CD4-positive, alpha-beta T cell (primary cell): ENCODE measurements at regions of chr5 and their contacts with region 1.

Region 1: DNA sequence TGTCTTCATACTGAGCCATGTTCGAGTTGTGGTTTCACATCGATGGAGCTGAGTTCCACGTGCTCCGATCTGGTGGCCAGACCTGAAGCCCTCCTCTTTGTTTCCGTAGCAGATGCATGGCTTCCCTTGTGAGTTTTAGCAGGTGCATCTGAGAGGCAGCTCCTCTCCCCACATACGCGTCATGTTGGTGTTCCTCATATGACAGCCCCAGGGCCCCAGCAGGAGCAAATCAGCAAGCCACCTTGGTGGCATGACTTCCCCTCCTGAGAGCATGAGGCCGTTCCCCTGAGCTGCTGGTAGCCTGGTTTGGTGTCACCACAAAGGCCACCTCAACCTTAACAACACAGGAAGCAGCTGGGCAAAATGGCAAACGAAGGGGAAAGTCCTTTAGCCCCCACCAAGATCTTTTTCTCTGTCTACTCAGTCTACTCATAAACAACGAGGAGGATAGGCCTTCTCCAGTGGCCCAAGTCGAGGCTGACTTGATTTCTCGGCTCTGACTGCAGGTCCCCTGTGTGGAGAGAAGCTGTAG is 5.9 kb downstream of the CYFIP2 start:
- DNase-seq: peak; percentile 74 to 97 (median 80)
- ATAC-seq: peak; percentile 90
- H3K4me3 ChIP-seq: peak overlapping the region; percentile 8
- H3K4me3 Mint-ChIP-seq: peak overlapping the region; percentile 80
- H3K27ac ChIP-seq: peak overlapping the region; percentile 81 to 94
- H3K27ac Mint-ChIP-seq: peak overlapping the region; percentile 93
- H3K4me1 ChIP-seq: peaks cover 74% of the 10 kb centered on the region
- H3K4me1 Mint-ChIP-seq: peaks cover 96% of the 10 kb centered on the region
- H3K27me3 ChIP-seq: no peaks in the 10 kb centered on the region
- H3K27me3 Mint-ChIP-seq: no peaks in the 10 kb centered on the region
- CTCF ChIP-seq: no peak

Region 2: DNA sequence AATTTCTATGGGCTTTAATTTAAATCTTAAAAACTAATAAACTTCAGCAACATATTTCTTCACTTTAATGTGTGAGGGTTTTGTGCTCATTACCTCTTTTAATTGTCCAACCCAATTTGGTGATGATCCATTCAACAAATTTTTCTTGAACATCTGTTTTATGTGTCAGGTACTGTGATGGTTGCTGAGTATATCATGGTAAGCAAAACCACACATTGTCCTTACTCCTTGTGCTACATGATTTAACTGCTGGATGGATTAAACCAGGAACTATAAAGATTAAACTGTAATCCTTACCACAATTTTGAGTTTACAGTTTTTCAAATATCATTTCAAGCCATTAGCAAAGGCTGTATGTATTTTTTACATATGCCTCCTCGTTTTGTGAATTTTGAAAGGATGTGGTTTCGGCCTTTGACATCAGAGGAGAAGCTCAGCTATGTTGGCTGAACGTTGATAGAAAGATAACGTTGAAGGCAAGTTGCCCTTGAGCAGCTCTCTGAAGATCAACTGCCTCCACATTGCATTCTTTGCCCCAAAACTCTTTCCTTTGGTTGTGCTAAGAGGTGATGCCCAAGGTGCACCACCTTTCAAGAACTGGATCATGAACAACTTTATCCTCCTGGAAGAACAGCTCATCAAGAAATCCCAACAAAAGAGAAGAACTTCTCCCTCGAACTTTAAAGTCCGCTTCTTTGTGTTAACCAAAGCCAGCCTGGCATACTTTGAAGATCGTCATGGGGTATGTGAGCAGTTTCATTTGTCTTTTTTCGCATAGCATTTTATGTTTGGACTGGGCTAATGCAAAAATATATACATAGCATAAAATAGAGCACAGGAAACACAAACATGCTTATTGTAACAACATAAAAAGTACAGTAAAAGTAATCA is 91.2 kb before region 1 on chr5 and contains the start of gene ITK:
- CTCF ChIA-PET with region 1: interaction called, 3 read pairs
- POLR2A ChIA-PET with region 1: interaction called, 12 read pairs
- intact Hi-C with region 1: no loop called
- DNase-seq: peak in 8 of 14 experiments; percentile 29 to 92 (median 53)
- ATAC-seq: peak; percentile 76
- H3K4me3 ChIP-seq: peak within 1 kb of the TSS; percentile 85
- H3K4me3 Mint-ChIP-seq: peak within 1 kb of the TSS; percentile 98
- H3K27ac ChIP-seq: peak within 1 kb of the TSS; percentile 69 to 74
- H3K27ac Mint-ChIP-seq: peak within 1 kb of the TSS; percentile 96
- H3K4me1 ChIP-seq: peaks cover 38% of the 10 kb centered on the region
- H3K4me1 Mint-ChIP-seq: peaks cover 57% of the 10 kb centered on the region
- H3K27me3 ChIP-seq: no peaks in the 10 kb centered on the region
- H3K27me3 Mint-ChIP-seq: no peaks in the 10 kb centered on the region
- CTCF ChIP-seq: no peak
- total RNA-seq, gene ITK: 289 to 292 TPM

Region 3: GRCh38 chr5:157204765-157205164 is 67.0 kb before region 1 on chr5:
- CTCF ChIA-PET with region 1: no interaction called
- POLR2A ChIA-PET with region 1: interaction called, 26 read pairs
- intact Hi-C with region 1: no loop called
- DNase-seq: peak in 4 of 14 experiments; percentile 46 to 80 (median 77)
- ATAC-seq: peak; percentile 56
- H3K4me3 ChIP-seq: no peak overlapping the region
- H3K4me3 Mint-ChIP-seq: peak overlapping the region; percentile 72
- H3K27ac ChIP-seq: peak overlapping the region; percentile 73 to 83
- H3K27ac Mint-ChIP-seq: peak overlapping the region; percentile 96
- H3K4me1 ChIP-seq: peaks cover 86% of the 10 kb centered on the region
- H3K4me1 Mint-ChIP-seq: peaks cover 92% of the 10 kb centered on the region
- H3K27me3 ChIP-seq: no peaks in the 10 kb centered on the region
- H3K27me3 Mint-ChIP-seq: no peaks in the 10 kb centered on the region
- CTCF ChIP-seq: no peak

Region 4: GRCh38 chr5:157225469-157226422 is 46.1 kb before region 1 on chr5:
- CTCF ChIA-PET with region 1: no interaction called
- POLR2A ChIA-PET with region 1: interaction called, 10 read pairs
- intact Hi-C with region 1: no loop called
- DNase-seq: peak in 3 of 14 experiments; percentile 32 to 76 (median 69)
- ATAC-seq: no peak
- H3K4me3 ChIP-seq: no peak overlapping the region
- H3K4me3 Mint-ChIP-seq: peak overlapping the region; percentile 20
- H3K27ac ChIP-seq: peak overlapping the region; percentile 41 to 44
- H3K27ac Mint-ChIP-seq: peak overlapping the region; percentile 80
- H3K4me1 ChIP-seq: peaks cover 65% of the 10 kb centered on the region
- H3K4me1 Mint-ChIP-seq: peaks cover 63% of the 10 kb centered on the region
- H3K27me3 ChIP-seq: no peaks in the 10 kb centered on the region
- H3K27me3 Mint-ChIP-seq: no peaks in the 10 kb centered on the region
- CTCF ChIP-seq: no peak

Region 5: GRCh38 chr5:157245477-157245876 is 26.3 kb before region 1 on chr5:
- CTCF ChIA-PET with region 1: no interaction called
- POLR2A ChIA-PET with region 1: interaction called, 123 read pairs
- intact Hi-C with region 1: no loop called
- DNase-seq: no peak
- ATAC-seq: no peak
- H3K4me3 ChIP-seq: no peak overlapping the region
- H3K4me3 Mint-ChIP-seq: no peak overlapping the region
- H3K27ac ChIP-seq: no peak overlapping the region
- H3K27ac Mint-ChIP-seq: peak overlapping the region; percentile 91
- H3K4me1 ChIP-seq: peaks cover 60% of the 10 kb centered on the region
- H3K4me1 Mint-ChIP-seq: peaks cover 68% of the 10 kb centered on the region
- H3K27me3 ChIP-seq: no peaks in the 10 kb centered on the region
- H3K27me3 Mint-ChIP-seq: no peaks in the 10 kb centered on the region
- CTCF ChIP-seq: no peak

Region 6: GRCh38 chr5:157283434-157283833 is 11.6 kb after region 1 on chr5:
- CTCF ChIA-PET with region 1: interaction called, 8 read pairs
- POLR2A ChIA-PET with region 1: interaction called, 48 read pairs
- intact Hi-C with region 1: loop called in 1 of 2 experiments (anchors 2 kb)
- DNase-seq: peak in 5 of 14 experiments; percentile 14 to 54 (median 52)
- ATAC-seq: peak; percentile 86
- H3K4me3 ChIP-seq: no peak overlapping the region
- H3K4me3 Mint-ChIP-seq: peak overlapping the region; percentile 52
- H3K27ac ChIP-seq: peak overlapping the region in 1 of 2 donors; percentile 24
- H3K27ac Mint-ChIP-seq: peak overlapping the region; percentile 83
- H3K4me1 ChIP-seq: peaks cover 66% of the 10 kb centered on the region
- H3K4me1 Mint-ChIP-seq: peaks cover 90% of the 10 kb centered on the region
- H3K27me3 ChIP-seq: no peaks in the 10 kb centered on the region
- H3K27me3 Mint-ChIP-seq: no peaks in the 10 kb centered on the region
- CTCF ChIP-seq: no peak

Region 7: DNA sequence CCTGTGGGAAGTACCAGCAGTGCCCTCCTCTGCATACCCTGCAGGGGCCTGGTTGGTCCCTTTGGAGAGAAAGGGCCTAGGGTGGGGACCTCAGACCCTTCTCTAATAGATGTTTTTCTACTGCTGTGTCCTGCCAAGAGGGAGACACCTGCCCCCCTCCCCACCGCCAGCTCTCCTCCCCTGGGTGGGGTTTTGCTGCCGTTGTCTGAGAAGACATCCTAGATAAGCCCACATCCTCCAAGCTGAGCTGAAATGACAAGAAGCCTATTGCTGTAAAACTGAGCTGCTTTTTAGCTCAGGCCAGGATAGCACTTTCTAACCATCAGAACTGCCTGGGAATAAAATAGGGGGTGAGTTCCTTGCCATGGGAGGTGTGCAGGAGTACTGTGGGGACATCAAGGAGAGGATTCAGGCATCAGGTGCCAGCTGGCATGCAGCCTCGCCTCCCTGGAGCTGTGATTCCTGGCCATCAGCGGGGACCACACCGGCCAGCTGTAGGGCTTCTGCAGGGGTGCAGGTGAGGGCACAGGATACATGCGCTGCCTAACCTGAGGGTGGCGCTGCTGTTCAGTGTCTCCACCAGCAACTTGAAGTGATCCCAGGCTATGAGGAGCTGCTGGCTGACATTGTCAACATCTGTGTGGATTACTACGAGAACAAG is 32.0 kb after region 1 on chr5:
- CTCF ChIA-PET with region 1: interaction called, 14 read pairs
- POLR2A ChIA-PET with region 1: interaction called, 77 read pairs
- intact Hi-C with region 1: loop called in 1 of 2 experiments (anchors 5 kb)
- DNase-seq: peak; percentile 45 to 86 (median 56)
- ATAC-seq: peak; percentile 72
- H3K4me3 ChIP-seq: peak overlapping the region; percentile 42
- H3K4me3 Mint-ChIP-seq: peak overlapping the region; percentile 87
- H3K27ac ChIP-seq: peak overlapping the region; percentile 54 to 65
- H3K27ac Mint-ChIP-seq: peak overlapping the region; percentile 80
- H3K4me1 ChIP-seq: peaks cover 57% of the 10 kb centered on the region
- H3K4me1 Mint-ChIP-seq: peaks cover 70% of the 10 kb centered on the region
- H3K27me3 ChIP-seq: no peaks in the 10 kb centered on the region
- H3K27me3 Mint-ChIP-seq: no peaks in the 10 kb centered on the region
- CTCF ChIP-seq: peak; percentile 26

Region 8: DNA sequence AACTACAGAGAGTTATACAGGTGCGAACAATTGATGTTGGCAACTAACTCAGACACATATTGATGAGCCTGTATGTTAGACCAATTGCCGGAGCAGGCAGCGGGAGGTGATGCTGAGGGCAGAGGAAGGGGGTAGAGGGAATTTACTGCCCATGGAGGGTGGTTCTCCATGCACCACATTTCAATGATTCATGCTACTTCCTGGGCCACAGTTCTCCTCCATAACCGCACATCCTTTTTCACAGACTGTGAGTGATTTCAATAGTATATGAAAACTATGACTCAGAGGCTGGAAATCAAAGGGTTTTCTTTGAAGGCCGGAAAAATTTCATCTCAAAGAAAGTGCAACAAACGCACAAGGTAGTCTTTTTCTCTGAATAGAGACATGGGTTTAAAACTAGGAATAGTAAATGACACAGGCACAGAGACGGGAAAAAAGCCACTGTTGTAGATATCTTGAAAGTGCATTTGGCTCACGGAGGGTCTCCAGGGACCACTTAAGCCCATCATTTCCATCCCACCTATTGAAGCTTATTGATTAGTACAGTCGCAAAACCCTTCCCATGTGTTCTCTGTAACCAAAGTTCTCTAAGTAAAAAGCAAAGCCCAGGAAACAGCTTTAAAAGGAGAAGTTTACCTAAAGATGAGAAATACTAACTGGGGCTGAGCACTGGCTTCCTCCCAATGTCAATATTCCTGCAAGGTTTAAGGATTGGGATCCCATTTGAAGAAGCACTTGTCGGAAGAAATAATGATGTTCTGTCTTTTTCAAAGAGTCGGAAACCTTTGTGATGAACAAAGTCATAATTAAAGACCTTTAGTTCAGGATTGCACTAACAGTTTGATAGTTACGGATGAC is 331.8 kb after region 1 on chr5:
- CTCF ChIA-PET with region 1: no interaction called
- POLR2A ChIA-PET with region 1: no interaction called
- intact Hi-C with region 1: no loop called
- DNase-seq: peak; percentile 32 to 92 (median 56)
- ATAC-seq: peak; percentile 85
- H3K4me3 ChIP-seq: peak overlapping the region; percentile 11
- H3K4me3 Mint-ChIP-seq: peak overlapping the region; percentile 26
- H3K27ac ChIP-seq: peak overlapping the region; percentile 43 to 76
- H3K27ac Mint-ChIP-seq: peak overlapping the region; percentile 84
- H3K4me1 ChIP-seq: peaks cover 62% of the 10 kb centered on the region
- H3K4me1 Mint-ChIP-seq: peaks cover 53% of the 10 kb centered on the region
- H3K27me3 ChIP-seq: no peaks in the 10 kb centered on the region
- H3K27me3 Mint-ChIP-seq: no peaks in the 10 kb centered on the region
- CTCF ChIP-seq: no peak